ENCODE measurements at regions of chr11 and their contacts with region 1.

Region 1: DNA sequence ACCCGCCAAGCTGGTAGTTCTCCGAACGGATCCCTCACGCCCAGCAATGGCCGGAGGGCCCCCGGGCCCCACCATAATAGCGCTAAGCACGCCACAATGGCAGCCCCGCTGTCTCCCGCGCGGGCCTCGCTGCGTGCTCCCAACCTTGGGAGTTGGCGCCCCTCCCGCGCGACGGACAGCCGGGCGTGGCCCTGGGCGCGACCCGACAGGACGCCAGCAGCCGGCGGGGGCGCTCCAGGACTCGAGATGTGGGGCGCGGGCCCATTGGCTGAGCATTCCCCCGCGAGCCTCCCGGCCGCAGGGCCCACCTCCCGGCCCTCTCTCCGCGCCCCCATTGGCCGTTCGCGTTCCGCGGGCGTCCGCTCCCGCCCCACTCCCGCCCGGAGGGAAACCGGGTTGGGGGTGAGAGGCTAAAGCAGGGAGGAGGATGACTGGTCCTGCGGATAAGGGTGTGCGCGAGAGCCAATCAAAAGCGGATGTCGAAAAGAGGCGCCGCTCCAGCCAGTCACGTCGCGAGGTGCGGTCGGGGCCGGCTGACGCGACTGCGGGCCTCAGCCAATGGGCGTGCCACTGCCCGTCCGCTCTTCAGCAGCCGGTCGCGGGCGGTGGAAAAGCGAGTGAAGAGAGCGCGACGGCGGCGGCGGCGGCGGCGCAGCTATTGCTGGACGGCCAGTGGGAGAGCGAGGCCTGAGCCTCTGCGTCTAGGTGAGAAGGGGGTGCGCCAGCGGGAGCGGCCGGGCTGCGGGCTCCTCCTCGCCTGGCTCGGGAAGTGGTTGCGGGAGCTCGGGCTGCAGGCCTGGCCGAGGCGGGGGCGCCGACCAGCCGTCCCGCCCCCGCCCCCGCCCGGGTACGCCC is at the start of gene FAR1:
- DNase-seq: peak; percentile 97
- H3K4me3 Mint-ChIP-seq: peak within 1 kb of the TSS; percentile 98
- H3K27ac Mint-ChIP-seq: peak within 1 kb of the TSS; percentile 99
- H3K4me1 Mint-ChIP-seq: peaks cover 42% of the 10 kb centered on the region
- H3K27me3 Mint-ChIP-seq: peaks cover 17% of the 10 kb centered on the region
- total RNA-seq, gene FAR1: 67.3 and 67.4 TPM in 2 replicates

Region 2: DNA sequence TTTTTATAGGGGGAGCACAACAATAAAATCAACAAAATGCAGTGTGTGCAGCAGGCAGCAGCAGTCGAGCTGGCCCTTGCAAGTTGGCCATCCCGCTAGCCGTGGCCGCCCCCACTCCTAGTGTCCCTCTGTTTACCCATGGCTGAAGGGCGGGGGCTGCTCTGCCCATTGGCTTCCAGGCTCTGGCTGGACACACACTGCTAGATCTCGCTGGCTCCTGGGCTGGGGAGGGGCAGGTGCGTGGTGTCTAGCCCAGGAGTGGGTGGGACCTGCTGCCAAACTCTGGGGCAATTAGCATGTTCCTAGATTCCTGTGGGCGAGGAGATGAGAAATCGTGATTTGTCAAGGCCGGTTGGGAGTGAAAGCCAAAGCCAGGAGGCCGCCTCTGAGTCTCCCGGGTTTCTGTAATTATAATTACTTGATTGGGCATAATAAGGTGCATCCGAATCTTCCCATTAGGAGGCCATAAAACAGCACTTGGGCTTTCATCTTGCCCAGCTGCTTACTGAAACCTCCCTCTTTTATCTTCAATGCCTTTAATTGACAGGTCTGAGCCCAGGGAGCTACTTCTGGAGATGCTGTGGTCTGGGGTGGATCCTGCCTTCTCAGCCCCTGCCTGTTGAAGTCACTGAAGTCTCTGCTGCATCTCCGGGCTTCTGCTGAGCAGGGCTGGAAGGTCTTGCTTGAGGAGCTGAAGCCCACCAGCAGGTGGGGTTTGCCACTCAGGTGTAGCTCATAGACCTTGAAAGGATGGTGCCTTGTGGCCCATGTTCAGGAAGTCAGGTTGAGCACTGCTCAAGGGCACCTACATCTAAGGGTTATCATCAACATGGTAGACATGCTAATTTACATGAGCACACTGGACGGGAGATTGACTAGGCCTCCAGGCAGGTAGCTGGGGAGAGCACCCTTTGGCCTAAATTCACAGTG is 1615.4 kb before region 1 on chr11:
- intact Hi-C with region 1: no loop called
- DNase-seq: no peak
- H3K4me3 Mint-ChIP-seq: no peak overlapping the region
- H3K27ac Mint-ChIP-seq: no peak overlapping the region
- H3K4me1 Mint-ChIP-seq: peaks cover 26% of the 10 kb centered on the region
- H3K27me3 Mint-ChIP-seq: no peaks in the 10 kb centered on the region

Region 3: DNA sequence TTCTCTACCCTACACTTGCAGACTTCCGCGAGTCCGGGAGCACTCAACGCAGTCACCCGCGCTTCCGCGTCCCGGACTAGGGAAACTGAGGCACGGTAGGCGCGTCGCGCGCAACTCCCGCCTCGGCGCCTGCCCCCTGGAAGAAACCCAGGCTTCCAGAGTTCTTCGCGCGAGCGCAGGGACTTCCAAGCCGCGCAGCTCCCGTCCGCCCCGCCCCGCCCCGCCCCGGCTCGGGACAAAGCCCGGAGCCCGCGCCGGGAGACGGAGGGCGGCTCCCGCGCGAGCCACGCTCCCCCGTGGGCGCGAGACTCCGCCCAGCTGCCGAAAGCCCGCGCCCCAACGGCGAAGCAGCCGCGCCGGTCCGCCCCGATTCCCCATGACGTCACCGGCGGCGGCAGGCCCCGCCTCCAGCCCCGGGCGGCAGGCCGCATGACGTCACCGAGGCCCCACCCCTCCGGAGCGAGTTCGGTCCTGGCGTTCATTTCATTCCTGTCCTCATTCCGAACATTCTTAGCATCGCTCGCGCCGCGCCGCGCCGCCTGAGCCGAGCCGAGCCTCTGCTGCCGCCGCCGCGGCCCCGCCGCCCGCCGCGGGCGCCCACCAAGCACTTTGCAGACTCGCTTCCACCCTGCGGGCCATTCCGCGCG is 994.3 kb before region 1 on chr11 and contains the start of gene TEAD1:
- intact Hi-C with region 1: loop called (anchors 2 kb)
- DNase-seq: peak; percentile 86
- H3K4me3 Mint-ChIP-seq: peak within 1 kb of the TSS; percentile 82
- H3K27ac Mint-ChIP-seq: peak within 1 kb of the TSS; percentile 47
- H3K4me1 Mint-ChIP-seq: peaks cover 6% of the 10 kb centered on the region
- H3K27me3 Mint-ChIP-seq: peaks cover 52% of the 10 kb centered on the region
- total RNA-seq, gene TEAD1: 0.41 and 1.2 TPM in 2 replicates

Region 4: DNA sequence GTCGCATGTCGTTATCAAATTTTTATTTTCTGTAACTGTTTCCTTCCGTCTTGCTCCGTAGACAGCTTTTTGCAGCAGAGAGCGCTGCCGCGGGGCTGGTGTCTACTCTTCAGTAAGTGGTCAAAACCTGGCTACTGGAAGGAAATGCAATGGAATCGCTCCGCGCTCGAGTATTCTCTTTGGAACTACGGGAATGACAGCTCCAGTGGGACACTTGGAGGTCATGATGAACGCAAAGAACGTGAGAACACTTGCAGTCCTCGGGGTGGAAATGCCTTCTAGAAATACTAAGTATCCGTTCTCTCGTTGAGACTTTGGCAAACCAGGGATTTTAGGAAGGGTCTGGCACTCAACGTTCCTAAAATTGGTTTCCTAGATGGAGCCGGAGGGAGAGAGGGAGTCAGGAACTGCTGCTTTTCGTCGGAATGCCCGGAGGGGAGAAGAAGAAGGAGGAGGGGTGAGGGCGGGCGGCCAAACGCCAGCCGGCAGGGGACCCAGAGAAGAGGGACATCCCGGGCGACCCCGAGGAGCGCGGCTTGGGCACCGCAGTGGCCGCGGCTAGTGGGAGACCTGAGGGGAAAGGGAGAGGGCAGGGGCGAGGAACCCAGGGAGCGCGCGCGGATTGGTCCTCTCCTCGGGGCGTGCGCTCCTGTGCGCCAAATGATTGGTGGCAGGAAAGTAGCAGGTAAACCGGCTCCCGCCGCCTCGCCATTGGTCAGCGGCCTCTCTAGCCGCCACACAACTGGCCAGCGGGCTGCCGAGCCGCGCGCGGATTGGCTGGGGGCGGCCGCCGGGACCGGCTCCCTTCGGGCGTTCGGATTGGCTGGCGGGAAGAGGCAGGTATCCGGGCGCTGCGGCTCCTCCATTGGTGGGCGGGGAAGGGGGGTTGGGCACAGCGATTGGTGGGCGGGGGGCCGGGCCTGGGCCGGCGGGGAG is 391.2 kb before region 1 on chr11:
- intact Hi-C with region 1: loop called (anchors 1 kb)
- DNase-seq: peak; percentile 98
- H3K4me3 Mint-ChIP-seq: peak overlapping the region; percentile 98
- H3K27ac Mint-ChIP-seq: peak overlapping the region; percentile 80
- H3K4me1 Mint-ChIP-seq: peaks cover 52% of the 10 kb centered on the region
- H3K27me3 Mint-ChIP-seq: peaks cover 46% of the 10 kb centered on the region

Region 5: DNA sequence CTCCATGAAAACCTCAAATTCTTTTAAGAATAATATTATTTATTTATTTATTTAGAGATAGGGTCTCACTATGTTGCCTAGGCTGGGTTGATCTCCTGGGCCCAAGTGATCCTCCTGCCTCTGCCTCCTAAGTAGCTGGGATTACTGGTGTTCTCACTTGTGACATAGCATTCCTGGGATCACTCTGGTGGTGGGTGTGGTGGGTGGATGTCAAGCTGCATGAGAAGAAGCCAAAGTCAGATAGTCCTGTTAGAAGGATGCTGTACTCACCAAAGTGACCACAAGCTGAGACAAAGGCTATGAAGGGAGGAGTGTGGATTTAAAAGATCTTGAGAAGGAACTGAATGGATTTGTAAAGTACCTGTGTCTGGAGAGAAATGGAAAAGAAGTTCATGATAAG is 206.3 kb after region 1 on chr11:
- intact Hi-C with region 1: loop called (anchors 5 kb)
- DNase-seq: no peak
- H3K4me3 Mint-ChIP-seq: no peak overlapping the region
- H3K27ac Mint-ChIP-seq: no peak overlapping the region
- H3K4me1 Mint-ChIP-seq: peaks cover 19% of the 10 kb centered on the region
- H3K27me3 Mint-ChIP-seq: peaks cover 10% of the 10 kb centered on the region

Measured in activated T-helper 1 cell treated with anti-CD3 and anti-CD28 coated beads, Interleukin-12 subunit alpha, Interleukin-12 subunit beta, Interleukin-2, Interleukin-4 antibody, amounts not matched to agents 30 ng/mL and 10 ng/mL and 1 ng/mL, durations not matched to agents 14 hours and 24 hours and 36 hours (primary cell).